CD8-positive, alpha-beta memory T cell (primary cell): ENCODE measurements at regions of chr12 and their contacts with region 1.

Region 1: GRCh38 chr12:53757095-53757770 is 5.5 kb upstream of the CISTR start:
- DNase-seq: peak; percentile 66 to 86 (median 74)
- H3K4me3 ChIP-seq: peak overlapping the region; percentile 10
- H3K4me3 Mint-ChIP-seq: peak overlapping the region; percentile 57 to 79 (median 73)
- H3K27ac ChIP-seq: no peak overlapping the region
- H3K27ac Mint-ChIP-seq: peak overlapping the region in 6 of 8 donors; percentile 52 to 83 (median 64)
- H3K4me1 ChIP-seq: peaks cover 9% of the 10 kb centered on the region
- H3K4me1 Mint-ChIP-seq: peaks cover 0 to 16% (median 13%) of the 10 kb centered on the region in 3 donors
- H3K27me3 ChIP-seq: peaks cover 36% of the 10 kb centered on the region
- H3K27me3 Mint-ChIP-seq: peaks cover 31 to 40% of the 10 kb centered on the region in 2 donors

Region 2: DNA sequence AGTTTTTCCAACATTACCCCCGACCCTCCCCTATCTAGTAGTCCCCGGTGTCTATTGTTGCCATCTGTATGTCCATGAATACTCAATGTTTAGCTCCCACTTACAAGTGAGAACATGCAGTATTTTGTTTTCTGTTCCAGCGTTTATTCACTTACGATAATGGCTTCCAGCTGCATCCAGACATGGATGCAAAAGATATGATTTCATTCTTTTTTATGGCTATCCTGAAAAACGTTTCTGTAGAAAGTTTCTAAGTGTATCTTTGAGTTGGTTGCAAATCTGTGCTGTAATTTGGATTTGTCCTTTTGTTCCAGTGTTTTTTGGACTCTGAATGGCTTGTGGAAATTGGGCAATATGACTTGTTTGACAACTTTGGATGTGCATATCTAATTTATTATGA is 365.5 kb before region 1 on chr12:
- CTCF ChIA-PET with region 1: no interaction called
- POLR2A ChIA-PET with region 1: no interaction called
- DNase-seq: no peak
- H3K4me3 ChIP-seq: no peak overlapping the region
- H3K4me3 Mint-ChIP-seq: peak overlapping the region in 5 of 7 donors; percentile 5 to 50 (median 19)
- H3K27ac ChIP-seq: no peak overlapping the region
- H3K27ac Mint-ChIP-seq: peak overlapping the region in 3 of 8 donors; percentile 12 to 73 (median 58)
- H3K4me1 ChIP-seq: peaks cover 28% of the 10 kb centered on the region
- H3K4me1 Mint-ChIP-seq: peaks cover 39 to 60% (median 53%) of the 10 kb centered on the region in 3 donors
- H3K27me3 ChIP-seq: no peaks in the 10 kb centered on the region
- H3K27me3 Mint-ChIP-seq: no peaks in the 10 kb centered on the region

Region 3: DNA sequence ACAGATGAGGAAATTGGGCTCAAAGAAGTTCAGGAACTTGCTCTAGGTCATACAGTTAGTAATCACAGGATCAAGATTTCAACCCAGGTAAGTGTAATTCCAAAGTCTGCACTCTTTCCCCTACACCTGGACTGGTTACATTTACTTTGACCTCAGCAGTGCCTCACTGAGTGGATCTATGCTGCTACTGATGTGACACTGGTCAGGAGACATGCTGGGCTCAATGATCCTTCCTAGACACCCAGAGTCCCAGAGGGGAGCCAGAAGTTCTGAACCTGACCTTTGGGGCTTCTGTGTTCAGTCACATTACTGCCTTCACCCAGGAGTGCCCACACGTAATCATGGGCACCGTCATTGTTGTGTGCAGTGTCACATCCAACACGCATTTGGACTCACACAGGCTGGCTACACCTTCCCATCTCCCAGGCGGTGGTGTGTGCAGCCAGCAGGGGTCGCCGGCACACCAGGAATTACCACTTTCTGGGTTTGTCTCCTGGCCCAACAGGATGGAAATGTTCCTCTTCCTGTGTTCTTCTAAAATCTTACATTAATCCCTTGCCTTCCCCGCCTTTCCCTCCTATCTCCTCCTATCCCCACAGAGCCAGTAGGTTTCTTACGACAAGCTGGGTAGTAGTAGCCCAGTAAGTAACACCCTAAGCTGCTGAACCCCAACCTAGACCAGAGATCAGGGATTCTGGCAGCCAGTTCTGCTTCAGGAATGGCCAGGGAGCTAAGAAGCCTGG is 55.5 kb before region 1 on chr12:
- CTCF ChIA-PET with region 1: interaction called, 13 read pairs
- POLR2A ChIA-PET with region 1: no interaction called
- DNase-seq: peak; percentile 58 to 83 (median 68)
- H3K4me3 ChIP-seq: no peak overlapping the region
- H3K4me3 Mint-ChIP-seq: peak overlapping the region in 1 of 7 donors; percentile 14
- H3K27ac ChIP-seq: no peak overlapping the region
- H3K27ac Mint-ChIP-seq: peak overlapping the region in 1 of 8 donors; percentile 51
- H3K4me1 ChIP-seq: peaks cover 2% of the 10 kb centered on the region
- H3K4me1 Mint-ChIP-seq: peaks cover 3 to 6% (median 6%) of the 10 kb centered on the region in 3 donors
- H3K27me3 ChIP-seq: peaks cover 49% of the 10 kb centered on the region
- H3K27me3 Mint-ChIP-seq: peaks cover 33 to 88% of the 10 kb centered on the region in 2 donors

Region 4: DNA sequence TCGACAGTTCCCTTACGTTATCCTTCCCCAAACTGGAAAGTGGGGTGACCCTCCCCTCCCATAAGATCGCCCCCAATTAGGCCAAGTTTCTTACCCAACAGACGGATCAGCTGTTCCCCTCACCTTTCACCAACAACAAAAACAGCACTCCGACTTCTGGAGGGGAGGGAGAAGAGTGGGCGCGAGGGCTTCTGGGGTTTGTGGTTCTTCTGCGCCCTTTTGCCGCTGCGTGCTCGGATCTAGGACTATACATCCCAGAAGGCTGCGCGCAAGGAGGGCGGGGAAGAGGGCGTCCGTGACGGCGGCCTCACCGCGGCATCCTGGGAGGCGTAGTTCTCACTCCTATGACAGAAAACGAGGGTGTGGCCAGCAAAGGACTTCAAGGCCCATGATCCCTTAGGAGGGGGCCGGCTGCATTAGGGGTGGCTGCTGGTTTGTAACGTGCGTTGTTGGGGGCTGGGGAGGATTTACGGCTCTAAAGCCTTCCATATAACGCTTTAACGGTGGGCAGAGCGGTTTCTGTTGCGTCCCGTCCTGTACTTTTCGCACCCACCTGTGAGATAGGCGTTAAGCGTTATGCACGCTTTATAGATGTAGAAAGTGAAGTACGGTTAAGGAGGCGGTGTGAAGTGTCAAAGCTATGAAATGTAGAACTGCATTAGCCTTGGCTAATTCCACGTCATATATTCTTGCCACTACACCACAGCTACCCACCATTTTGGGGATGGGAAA is 29.8 kb before region 1 on chr12 and contains the start of gene CALCOCO1:
- CTCF ChIA-PET with region 1: interaction called, 10 read pairs
- POLR2A ChIA-PET with region 1: no interaction called
- DNase-seq: peak; percentile 94 to 97 (median 96)
- H3K4me3 ChIP-seq: peak within 1 kb of the TSS; percentile 97
- H3K4me3 Mint-ChIP-seq: peak within 1 kb of the TSS; percentile 89 to 97 (median 94)
- H3K27ac ChIP-seq: peak within 1 kb of the TSS; percentile 64
- H3K27ac Mint-ChIP-seq: peak within 1 kb of the TSS; percentile 49 to 98 (median 92)
- H3K4me1 ChIP-seq: peaks cover 23% of the 10 kb centered on the region
- H3K4me1 Mint-ChIP-seq: peaks cover 28 to 45% (median 39%) of the 10 kb centered on the region in 3 donors
- H3K27me3 ChIP-seq: no peaks in the 10 kb centered on the region
- H3K27me3 Mint-ChIP-seq: peaks cover 3 to 7% of the 10 kb centered on the region in 2 donors
- total RNA-seq, gene CALCOCO1: 29.5 to 31.4 TPM